ENCODE measurements at regions of chr17 and their contacts with region 1.

Region 1: GRCh38 chr17:17591355-17592298 is at the start of gene PEMT:
- DNase-seq: peak; percentile 95 to 99 (median 98)
- H3K4me3 ChIP-seq: peak within 1 kb of the TSS; percentile 70 to 100 (median 95)
- H3K27ac ChIP-seq: peak within 1 kb of the TSS in 58 of 59 donors; percentile 55 to 95 (median 88)
- H3K27me3 ChIP-seq: no peaks in the 10 kb centered on the region
- CTCF ChIP-seq: peak in 31 of 56 donors; percentile 4 to 61 (median 37)
- total RNA-seq, gene PEMT: 11.4 to 41.9 (median 24.7) TPM

Region 2: GRCh38 chr17:17476865-17477467 is 114.7 kb before region 1 on chr17 and contains the start of gene MED9:
- intact Hi-C with region 1: loop called in 1 of 2 experiments (anchors 5 kb)
- DNase-seq: peak; percentile 83 to 94 (median 90)
- H3K4me3 ChIP-seq: peak within 1 kb of the TSS; percentile 70 to 100 (median 96)
- H3K27ac ChIP-seq: peak within 1 kb of the TSS; percentile 39 to 96 (median 88)
- H3K27me3 ChIP-seq: no peaks in the 10 kb centered on the region
- CTCF ChIP-seq: peak in 21 of 56 donors; percentile 6 to 50 (median 21)
- total RNA-seq, gene MED9: 19.4 to 47.3 (median 33.7) TPM

Region 3: DNA sequence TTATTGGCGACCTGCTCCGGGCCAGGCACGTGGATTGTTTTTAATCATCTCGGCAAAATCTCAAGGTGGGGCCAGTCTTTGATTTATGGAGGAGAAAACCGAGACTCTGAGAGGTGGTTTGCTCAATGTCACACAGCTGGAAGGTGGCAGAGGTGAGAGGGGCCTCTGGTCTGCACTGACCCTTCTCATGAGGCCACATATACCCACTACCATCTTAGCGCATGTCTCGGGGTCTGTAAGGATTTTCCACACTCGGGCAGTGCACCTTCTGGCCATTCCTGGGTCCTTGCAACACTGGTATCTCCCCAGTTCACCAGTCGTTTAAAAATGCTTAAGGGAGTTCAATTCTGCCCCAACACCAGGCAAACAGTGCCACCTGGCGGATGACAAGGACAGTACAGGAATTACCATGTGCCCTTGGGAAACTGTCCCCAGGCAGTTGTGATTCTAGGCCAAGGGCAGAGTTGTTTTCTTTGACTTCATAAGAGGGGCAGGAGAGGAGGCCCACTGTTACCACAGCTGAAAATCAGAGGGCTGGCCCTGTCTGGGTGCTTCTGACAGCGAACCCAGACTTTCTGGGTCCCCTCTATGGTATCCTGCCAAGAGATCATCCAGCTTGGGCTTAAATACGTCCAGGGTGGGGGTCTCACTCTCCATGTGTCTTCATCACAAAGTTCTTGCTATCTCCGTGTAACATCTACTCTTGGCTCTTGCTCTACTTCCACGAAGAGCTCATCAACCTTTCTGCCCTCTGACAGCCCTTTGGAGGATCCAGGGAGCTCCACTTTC is 50.2 kb after region 1 on chr17:
- intact Hi-C with region 1: no loop called
- DNase-seq: peak; percentile 64 to 88 (median 78)
- H3K4me3 ChIP-seq: no peak overlapping the region
- H3K27ac ChIP-seq: peak overlapping the region in 1 of 59 donors; percentile 22
- H3K27me3 ChIP-seq: no peaks in the 10 kb centered on the region
- CTCF ChIP-seq: peak; percentile 68 to 96 (median 91)

Measured in dorsolateral prefrontal cortex (tissue), 120 donors.